MCF 10A (cell line): ENCODE measurements at regions of chr1 and their contacts with region 1.

Region 1: DNA sequence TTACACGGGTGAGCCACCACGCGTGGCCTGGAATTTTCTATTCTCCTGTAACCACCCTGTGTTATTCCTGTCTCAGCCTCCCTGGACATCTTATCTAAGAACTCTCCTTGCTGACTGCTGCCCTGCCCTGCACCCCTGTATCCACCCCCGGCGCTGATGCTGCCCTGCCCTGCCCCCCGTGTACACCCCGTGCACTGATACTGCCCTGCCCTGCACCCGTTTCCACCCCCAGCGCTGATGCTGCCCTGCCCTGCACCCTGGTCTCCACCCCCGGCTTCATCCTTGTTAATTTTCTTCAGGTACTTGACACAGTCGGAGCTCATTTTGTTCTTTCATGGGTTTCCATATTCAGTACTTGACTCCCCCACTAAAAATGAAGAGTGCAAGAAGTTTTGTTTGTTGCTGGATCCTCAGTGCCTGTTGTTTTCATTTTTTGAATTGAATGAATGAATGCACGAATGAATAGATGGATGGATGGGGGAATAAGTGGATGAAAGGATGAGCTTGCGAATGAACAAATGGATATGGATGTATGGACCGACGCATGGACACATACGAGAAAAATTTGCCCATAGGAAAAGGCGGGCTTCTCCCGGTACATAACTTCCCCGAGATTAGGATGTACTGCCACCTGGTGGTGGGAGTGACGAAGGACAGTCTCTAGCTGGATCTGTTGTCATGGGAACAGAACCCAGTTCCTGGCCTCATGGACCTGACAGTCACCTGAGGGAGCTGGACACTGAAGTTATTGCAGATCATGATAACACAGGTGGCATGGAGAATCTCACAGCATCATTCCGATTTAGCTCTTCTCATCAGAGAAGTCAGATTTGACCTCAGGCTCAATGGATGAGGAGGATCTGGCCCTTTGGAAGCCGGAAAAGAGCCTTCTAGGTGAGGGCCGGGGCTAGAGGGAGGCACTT is 14.9 kb downstream of the AADACL4 start:
- DNase-seq: peak; percentile 88
- H3K4me3 Mint-ChIP-seq: no peak overlapping the region
- H3K27ac Mint-ChIP-seq: no peak overlapping the region
- H3K4me1 Mint-ChIP-seq: peaks cover 5% of the 10 kb centered on the region
- H3K27me3 Mint-ChIP-seq: peaks cover 44% of the 10 kb centered on the region
- CTCF ChIP-seq: peak; percentile 85

Region 2: DNA sequence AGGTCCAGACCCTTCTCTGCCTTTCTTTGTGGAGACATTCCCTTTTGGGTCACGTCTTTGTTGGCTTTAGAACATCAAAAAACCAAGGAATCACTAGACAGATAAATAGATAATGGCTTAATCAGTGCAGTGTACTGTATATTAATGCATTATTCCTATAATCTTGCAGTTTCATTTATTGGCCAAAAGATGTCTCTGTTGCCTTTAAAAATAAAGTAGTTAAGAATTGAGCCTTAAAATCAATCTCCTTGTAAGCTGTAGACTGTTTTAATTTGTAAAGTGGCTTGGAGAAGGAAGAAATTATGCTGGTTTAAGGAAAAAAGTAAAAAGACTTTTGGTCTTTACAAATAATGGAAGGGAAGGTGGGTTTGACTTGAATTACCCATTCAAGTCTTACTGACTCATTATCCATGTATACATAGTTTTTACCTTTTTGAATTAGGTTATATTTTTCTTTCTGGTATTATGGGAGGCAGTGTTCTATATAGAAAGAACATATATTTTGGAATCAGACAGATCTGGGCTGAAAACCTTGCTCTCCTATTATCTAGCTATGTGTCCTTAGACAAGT is 344.4 kb before region 1 on chr1:
- CTCF ChIA-PET with region 1: interaction called, 12 read pairs
- POLR2A ChIA-PET with region 1: no interaction called
- intact Hi-C with region 1: loop called (anchors 1 kb)
- DNase-seq: peak; percentile 8
- H3K4me3 Mint-ChIP-seq: no peak overlapping the region
- H3K27ac Mint-ChIP-seq: no peak overlapping the region
- H3K4me1 Mint-ChIP-seq: no peaks in the 10 kb centered on the region
- H3K27me3 Mint-ChIP-seq: no peaks in the 10 kb centered on the region
- CTCF ChIP-seq: peak; percentile 34

Region 3: DNA sequence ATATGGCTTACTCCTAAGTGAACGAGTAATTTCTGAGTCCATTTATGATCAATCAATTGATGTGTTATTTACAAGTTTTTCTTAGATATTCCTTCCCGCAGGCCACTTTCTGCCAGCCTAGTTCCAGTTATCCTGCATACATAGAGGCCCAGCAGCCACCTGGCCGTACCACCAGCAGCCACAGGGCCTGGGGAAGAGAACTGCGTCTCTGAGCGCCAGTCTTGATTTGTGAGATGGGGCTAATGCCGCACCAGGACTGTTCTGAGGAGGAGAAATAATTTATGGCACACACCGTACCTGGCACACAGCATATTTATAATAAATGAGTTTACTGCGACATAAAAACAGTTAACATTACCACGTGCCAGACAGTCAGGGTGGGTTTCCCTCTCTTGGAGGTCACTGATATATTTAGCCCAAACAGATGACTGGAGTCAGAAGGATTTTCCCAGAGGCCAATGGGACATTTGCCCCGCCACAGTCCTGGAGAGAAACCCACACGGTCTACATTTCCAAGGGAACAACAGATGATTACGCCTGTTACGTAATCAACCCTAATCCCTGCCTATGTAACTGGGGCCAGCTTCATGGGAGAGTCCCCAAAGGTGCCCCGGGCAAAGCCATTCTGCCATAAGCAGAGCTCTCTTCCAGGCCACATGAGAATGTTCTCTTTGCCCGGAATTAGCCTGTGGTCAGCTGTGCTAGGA is 78.8 kb before region 1 on chr1:
- CTCF ChIA-PET with region 1: no interaction called
- POLR2A ChIA-PET with region 1: no interaction called
- intact Hi-C with region 1: no loop called
- DNase-seq: peak; percentile 75
- H3K4me3 Mint-ChIP-seq: no peak overlapping the region
- H3K27ac Mint-ChIP-seq: no peak overlapping the region
- H3K4me1 Mint-ChIP-seq: no peaks in the 10 kb centered on the region
- H3K27me3 Mint-ChIP-seq: no peaks in the 10 kb centered on the region
- CTCF ChIP-seq: no peak

Region 4: DNA sequence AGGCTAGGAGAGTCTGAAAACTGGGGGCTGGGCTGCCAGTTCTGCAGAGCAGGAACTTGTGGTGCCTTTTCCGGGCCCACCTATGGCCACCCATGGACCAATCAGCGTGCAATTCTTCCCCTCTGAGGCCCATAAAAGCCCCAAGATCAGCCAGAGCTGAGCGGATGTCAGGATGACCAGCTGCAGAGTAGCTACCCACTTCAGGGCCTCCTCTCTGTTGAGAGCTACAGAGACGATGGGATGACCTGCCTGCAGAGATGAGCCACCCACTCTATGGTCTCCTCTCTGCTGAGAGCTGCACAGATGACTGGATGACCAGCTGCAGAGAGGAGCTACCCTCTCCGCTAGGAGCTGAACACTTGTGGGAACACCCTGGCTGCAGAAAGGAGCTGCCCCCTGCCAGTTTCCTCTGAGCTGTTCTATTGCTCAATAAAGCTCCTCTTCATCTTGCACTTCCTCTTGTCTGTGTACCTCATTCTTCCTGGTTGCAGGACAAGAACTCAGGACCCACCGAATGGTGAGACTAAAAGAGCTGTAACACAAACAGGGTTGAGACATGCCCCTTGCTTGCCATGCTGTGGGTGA is 27.8 kb before region 1 on chr1:
- CTCF ChIA-PET with region 1: interaction called, 14 read pairs
- POLR2A ChIA-PET with region 1: no interaction called
- intact Hi-C with region 1: no loop called
- DNase-seq: no peak
- H3K4me3 Mint-ChIP-seq: no peak overlapping the region
- H3K27ac Mint-ChIP-seq: no peak overlapping the region
- H3K4me1 Mint-ChIP-seq: no peaks in the 10 kb centered on the region
- H3K27me3 Mint-ChIP-seq: peaks cover 13% of the 10 kb centered on the region
- CTCF ChIP-seq: no peak

Region 5: DNA sequence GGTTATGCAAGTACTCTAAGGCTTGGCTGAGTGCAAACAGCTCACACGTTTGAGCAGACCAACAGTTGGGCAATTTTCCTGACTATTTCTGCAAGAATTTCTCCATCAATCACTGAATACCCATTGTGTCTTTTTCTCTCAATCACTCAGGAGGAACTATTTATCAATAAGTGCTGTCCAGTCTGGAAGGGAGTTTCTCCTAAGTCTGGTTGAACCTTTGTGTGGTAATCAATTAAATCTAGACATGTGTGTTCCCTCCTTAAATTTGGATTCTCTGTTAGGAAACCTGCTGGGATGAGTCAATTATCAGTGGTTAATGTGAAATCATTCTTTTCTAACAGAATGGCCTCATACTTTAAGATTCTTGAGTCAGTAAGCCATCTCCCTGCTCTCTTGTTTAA is 50.3 kb after region 1 on chr1:
- CTCF ChIA-PET with region 1: no interaction called
- POLR2A ChIA-PET with region 1: no interaction called
- intact Hi-C with region 1: no loop called
- DNase-seq: peak; percentile 50
- H3K4me3 Mint-ChIP-seq: no peak overlapping the region
- H3K27ac Mint-ChIP-seq: no peak overlapping the region
- H3K4me1 Mint-ChIP-seq: no peaks in the 10 kb centered on the region
- H3K27me3 Mint-ChIP-seq: no peaks in the 10 kb centered on the region
- CTCF ChIP-seq: no peak